ENCODE measurements at regions of chr15 and their contacts with region 1.

Region 1: GRCh38 chr15:64067564-64068030 is 21.3 kb upstream of the DAPK2 start:
- DNase-seq: peak; percentile 79
- ATAC-seq: peak; percentile 89
- H3K4me3 Mint-ChIP-seq: no peak overlapping the region
- H3K27ac Mint-ChIP-seq: peak overlapping the region; percentile 71
- H3K4me1 Mint-ChIP-seq: peaks cover 26% of the 10 kb centered on the region
- H3K27me3 Mint-ChIP-seq: no peaks in the 10 kb centered on the region

Region 2: GRCh38 chr15:63683343-63683951 is 384.1 kb before region 1 on chr15:
- CTCF ChIA-PET with region 1: interaction called, 13 read pairs
- POLR2A ChIA-PET with region 1: no interaction called
- DNase-seq: no peak
- ATAC-seq: no peak
- H3K4me3 Mint-ChIP-seq: no peak overlapping the region
- H3K27ac Mint-ChIP-seq: no peak overlapping the region
- H3K4me1 Mint-ChIP-seq: no peaks in the 10 kb centered on the region
- H3K27me3 Mint-ChIP-seq: no peaks in the 10 kb centered on the region

Region 3: DNA sequence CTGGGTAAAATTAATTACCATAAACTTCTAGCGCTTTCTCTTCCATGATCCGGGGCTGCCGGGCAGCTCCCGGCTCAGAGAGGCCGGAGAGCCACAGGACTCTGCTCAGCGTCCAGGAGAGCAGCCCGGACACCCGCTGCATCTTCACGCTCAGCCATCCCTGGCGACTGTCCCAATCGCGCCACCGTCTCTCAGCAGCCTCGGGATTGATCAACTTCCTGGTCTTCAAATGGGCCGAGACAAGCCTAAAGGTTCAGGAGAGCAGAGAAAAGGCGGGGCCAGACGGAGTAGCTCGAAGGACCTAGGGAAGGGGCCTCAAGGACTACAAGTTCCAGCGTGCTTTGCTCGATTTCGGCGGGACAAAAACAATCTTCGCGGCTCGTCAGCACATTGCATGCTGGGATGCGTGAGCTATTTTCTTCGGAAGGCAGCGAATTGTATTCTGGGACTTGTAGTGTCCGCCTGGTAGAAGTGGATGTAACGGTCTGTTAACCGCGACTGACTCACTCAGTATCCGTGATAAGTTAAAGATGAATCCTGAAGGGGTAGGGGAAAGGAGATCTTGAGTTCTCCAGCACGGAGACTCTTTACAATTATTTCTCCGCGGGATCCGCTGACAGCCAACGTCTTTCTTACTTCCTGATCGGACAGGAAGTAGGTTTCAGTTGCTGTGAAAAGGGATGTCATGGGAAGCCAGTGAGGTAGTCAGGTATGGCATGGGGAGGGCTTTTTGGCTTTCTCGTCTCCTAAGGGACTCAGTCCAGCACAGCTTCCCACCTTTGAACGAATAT is 26.2 kb after region 1 on chr15 and contains the start of gene CIAO2A:
- CTCF ChIA-PET with region 1: interaction called, 12 read pairs
- POLR2A ChIA-PET with region 1: no interaction called
- DNase-seq: peak; percentile 98
- ATAC-seq: peak; percentile 76
- H3K4me3 Mint-ChIP-seq: peak within 1 kb of the TSS; percentile 99
- H3K27ac Mint-ChIP-seq: peak within 1 kb of the TSS; percentile 100
- H3K4me1 Mint-ChIP-seq: peaks cover 74% of the 10 kb centered on the region
- H3K27me3 Mint-ChIP-seq: no peaks in the 10 kb centered on the region
- total RNA-seq, gene CIAO2A: 78.7 to 80.9 TPM

Region 4: GRCh38 chr15:64216730-64217428 is 149.3 kb after region 1 on chr15:
- CTCF ChIA-PET with region 1: no interaction called
- POLR2A ChIA-PET with region 1: no interaction called
- DNase-seq: no peak
- ATAC-seq: no peak
- H3K4me3 Mint-ChIP-seq: no peak overlapping the region
- H3K27ac Mint-ChIP-seq: no peak overlapping the region
- H3K4me1 Mint-ChIP-seq: peaks cover 3% of the 10 kb centered on the region
- H3K27me3 Mint-ChIP-seq: no peaks in the 10 kb centered on the region

Measured in activated CD8-positive, alpha-beta T cell treated with anti-CD3 and anti-CD28 coated beads, Interleukin-2, amount 10 ng/mL, durations not matched to agents 7 days and 5 days (primary cell).